CD4-positive, alpha-beta T cell (primary cell): ENCODE measurements at regions of chr10 and their contacts with region 1.

Region 1: GRCh38 chr10:123229927-123230632 is 75.9 kb downstream of the BUB3 start:
- DNase-seq: no peak
- ATAC-seq: no peak
- H3K4me3 ChIP-seq: no peak overlapping the region
- H3K4me3 Mint-ChIP-seq: no peak overlapping the region
- H3K27ac ChIP-seq: no peak overlapping the region
- H3K27ac Mint-ChIP-seq: no peak overlapping the region
- H3K4me1 ChIP-seq: no peaks in the 10 kb centered on the region
- H3K4me1 Mint-ChIP-seq: no peaks in the 10 kb centered on the region
- H3K27me3 ChIP-seq: no peaks in the 10 kb centered on the region
- H3K27me3 Mint-ChIP-seq: no peaks in the 10 kb centered on the region
- CTCF ChIP-seq: no peak

Region 2: DNA sequence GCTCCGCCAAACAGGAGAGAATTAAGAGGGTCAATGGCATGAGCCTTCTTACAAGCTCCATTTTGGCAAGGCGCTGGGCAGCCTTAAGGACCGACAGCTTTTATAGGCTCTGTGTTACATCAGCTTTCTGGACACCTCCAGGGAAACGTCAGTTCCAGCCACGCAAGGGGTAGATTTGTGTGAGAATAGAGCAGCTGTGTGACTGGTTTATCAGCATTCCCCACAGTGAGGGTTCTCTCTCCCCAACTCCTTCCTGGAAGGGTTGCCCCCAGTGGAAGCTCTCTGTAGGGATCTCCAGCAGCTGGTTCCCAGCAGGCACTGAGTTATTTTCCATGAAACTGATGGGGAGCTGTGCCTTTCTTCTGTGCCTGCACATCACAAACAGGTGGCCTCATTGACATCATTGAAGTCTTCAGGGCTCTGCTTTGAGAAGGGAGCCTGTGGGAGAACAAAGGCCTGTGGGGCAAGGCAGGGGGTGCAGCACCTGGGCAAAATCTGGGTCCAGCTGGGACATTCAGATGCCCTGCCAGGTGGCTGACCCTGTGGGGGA is 384.2 kb before region 1 on chr10 and contains the start of gene CUZD1:
- CTCF ChIA-PET with region 1: no interaction called
- POLR2A ChIA-PET with region 1: no interaction called
- intact Hi-C with region 1: no loop called
- DNase-seq: no peak
- ATAC-seq: no peak
- H3K4me3 ChIP-seq: no peak within 1 kb of the TSS
- H3K4me3 Mint-ChIP-seq: no peak within 1 kb of the TSS
- H3K27ac ChIP-seq: no peak within 1 kb of the TSS
- H3K27ac Mint-ChIP-seq: no peak within 1 kb of the TSS
- H3K4me1 ChIP-seq: no peaks in the 10 kb centered on the region
- H3K4me1 Mint-ChIP-seq: no peaks in the 10 kb centered on the region
- H3K27me3 ChIP-seq: no peaks in the 10 kb centered on the region
- H3K27me3 Mint-ChIP-seq: no peaks in the 10 kb centered on the region
- CTCF ChIP-seq: no peak
- total RNA-seq, gene CUZD1: 0.27 to 0.64 TPM

Region 3: GRCh38 chr10:123252779-123253178 is 22.7 kb after region 1 on chr10:
- CTCF ChIA-PET with region 1: no interaction called
- POLR2A ChIA-PET with region 1: no interaction called
- intact Hi-C with region 1: loop called in 1 of 2 experiments (anchors 1 kb)
- DNase-seq: no peak
- ATAC-seq: no peak
- H3K4me3 ChIP-seq: no peak overlapping the region
- H3K4me3 Mint-ChIP-seq: no peak overlapping the region
- H3K27ac ChIP-seq: no peak overlapping the region
- H3K27ac Mint-ChIP-seq: no peak overlapping the region
- H3K4me1 ChIP-seq: peaks cover 3% of the 10 kb centered on the region
- H3K4me1 Mint-ChIP-seq: no peaks in the 10 kb centered on the region
- H3K27me3 ChIP-seq: no peaks in the 10 kb centered on the region
- H3K27me3 Mint-ChIP-seq: no peaks in the 10 kb centered on the region
- CTCF ChIP-seq: no peak